ENCODE measurements at regions of chr16 and their contacts with region 1.

Region 1: DNA sequence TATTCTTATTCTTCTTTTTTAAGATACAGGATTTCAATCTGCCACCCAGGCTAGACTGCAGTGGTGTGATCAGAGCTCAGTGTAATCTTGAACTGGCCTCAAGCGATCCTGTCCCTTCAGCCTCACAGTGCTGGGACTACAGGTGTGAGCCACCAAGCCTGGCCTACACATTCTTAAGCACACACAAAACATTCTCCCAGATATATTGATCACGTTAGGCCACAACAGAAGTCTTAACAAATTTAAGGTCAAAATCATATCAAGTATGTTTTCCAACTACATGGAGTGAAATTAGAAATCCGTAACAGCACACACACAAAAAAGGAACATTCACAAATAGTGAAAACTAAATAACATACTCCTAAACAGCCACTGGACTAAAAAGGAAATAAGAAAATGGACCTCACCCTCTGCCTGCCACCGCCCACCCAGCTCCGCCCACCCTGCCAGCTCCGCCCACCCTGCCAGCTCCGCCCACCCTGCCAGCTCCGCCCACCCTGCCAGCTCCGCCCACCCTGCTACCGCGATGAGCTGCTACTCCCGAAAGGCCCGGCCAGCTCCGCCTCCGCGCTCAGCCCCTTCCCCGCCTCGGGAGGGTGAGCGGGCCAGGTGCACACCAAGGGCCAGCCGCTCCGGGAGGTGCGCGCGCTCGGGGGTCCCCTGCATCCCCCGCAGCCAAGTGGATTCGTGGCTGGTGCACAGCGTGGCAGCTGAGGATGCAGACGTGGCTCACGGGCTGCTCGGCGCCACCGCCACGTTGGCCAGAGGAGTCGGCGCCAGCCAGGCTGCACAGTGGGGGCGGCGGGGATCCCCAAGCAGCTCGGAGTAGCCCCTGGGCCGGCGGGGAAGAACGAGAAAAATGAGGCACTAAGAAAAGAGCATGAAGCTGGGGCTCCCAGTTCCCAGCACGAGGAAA is 41.2 kb downstream of the C16orf87 start:
- DNase-seq: peak; percentile 77 to 82 (median 79)
- H3K4me3 ChIP-seq: peak overlapping the region in 1 of 2 donors; percentile 76
- H3K4me3 Mint-ChIP-seq: peak overlapping the region; percentile 79 to 90 (median 85)
- H3K27ac ChIP-seq: peak overlapping the region; percentile 15
- H3K27ac Mint-ChIP-seq: peak overlapping the region; percentile 28 to 89 (median 87)
- H3K4me1 ChIP-seq: peaks cover 8% of the 10 kb centered on the region
- H3K4me1 Mint-ChIP-seq: peaks cover 15 to 20% (median 17%) of the 10 kb centered on the region in 4 donors
- H3K27me3 ChIP-seq: no peaks in the 10 kb centered on the region
- H3K27me3 Mint-ChIP-seq: no peaks in the 10 kb centered on the region

Region 2: GRCh38 chr16:46673320-46674013 is 116.3 kb before region 1 on chr16:
- CTCF ChIA-PET with region 1: no interaction called
- POLR2A ChIA-PET with region 1: no interaction called
- intact Hi-C with region 1: no loop called
- DNase-seq: peak; percentile 44 to 63 (median 47)
- H3K4me3 ChIP-seq: no peak overlapping the region
- H3K4me3 Mint-ChIP-seq: no peak overlapping the region
- H3K27ac ChIP-seq: no peak overlapping the region
- H3K27ac Mint-ChIP-seq: peak overlapping the region in 1 of 7 donors; percentile 35
- H3K4me1 ChIP-seq: no peaks in the 10 kb centered on the region
- H3K4me1 Mint-ChIP-seq: peaks cover 0 to 4% (median 2%) of the 10 kb centered on the region in 4 donors
- H3K27me3 ChIP-seq: no peaks in the 10 kb centered on the region
- H3K27me3 Mint-ChIP-seq: no peaks in the 10 kb centered on the region

Region 3: DNA sequence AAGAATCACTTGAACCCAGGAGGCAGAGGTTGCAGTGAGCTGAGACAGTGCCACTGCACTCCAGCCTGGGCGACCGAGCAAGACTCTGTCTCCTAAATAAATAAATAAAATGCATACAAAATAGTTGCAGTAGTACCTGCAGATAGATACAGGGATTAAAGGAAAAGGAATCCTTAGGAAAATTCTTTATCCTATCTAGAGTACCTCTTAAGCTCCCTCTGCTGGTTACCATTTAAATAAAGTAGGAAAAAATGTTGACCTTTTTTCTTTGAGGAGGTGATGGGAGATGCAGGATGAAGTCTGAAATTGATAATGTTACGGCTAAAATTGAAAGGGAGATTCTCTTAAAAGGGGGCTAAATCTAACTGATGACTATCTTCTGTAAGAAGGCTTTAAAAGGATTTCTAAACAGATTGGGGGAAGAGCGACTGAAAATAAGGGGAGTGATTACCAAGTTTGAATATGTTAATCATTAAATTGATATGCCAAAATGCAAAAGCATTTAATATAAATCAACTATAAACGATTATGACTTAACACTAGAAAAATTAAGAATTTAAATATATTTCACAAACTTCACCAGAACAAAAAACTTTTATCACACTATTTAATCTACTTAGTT is 11.8 kb after region 1 on chr16:
- CTCF ChIA-PET with region 1: interaction called, 18 read pairs
- POLR2A ChIA-PET with region 1: interaction called, 3 read pairs
- intact Hi-C with region 1: no loop called
- DNase-seq: no peak
- H3K4me3 ChIP-seq: no peak overlapping the region
- H3K4me3 Mint-ChIP-seq: peak overlapping the region in 2 of 8 donors; percentile 24 to 43
- H3K27ac ChIP-seq: no peak overlapping the region
- H3K27ac Mint-ChIP-seq: peak overlapping the region in 1 of 7 donors; percentile 62
- H3K4me1 ChIP-seq: peaks cover 12% of the 10 kb centered on the region
- H3K4me1 Mint-ChIP-seq: peaks cover 11 to 22% (median 15%) of the 10 kb centered on the region in 4 donors
- H3K27me3 ChIP-seq: no peaks in the 10 kb centered on the region
- H3K27me3 Mint-ChIP-seq: no peaks in the 10 kb centered on the region

Region 4: DNA sequence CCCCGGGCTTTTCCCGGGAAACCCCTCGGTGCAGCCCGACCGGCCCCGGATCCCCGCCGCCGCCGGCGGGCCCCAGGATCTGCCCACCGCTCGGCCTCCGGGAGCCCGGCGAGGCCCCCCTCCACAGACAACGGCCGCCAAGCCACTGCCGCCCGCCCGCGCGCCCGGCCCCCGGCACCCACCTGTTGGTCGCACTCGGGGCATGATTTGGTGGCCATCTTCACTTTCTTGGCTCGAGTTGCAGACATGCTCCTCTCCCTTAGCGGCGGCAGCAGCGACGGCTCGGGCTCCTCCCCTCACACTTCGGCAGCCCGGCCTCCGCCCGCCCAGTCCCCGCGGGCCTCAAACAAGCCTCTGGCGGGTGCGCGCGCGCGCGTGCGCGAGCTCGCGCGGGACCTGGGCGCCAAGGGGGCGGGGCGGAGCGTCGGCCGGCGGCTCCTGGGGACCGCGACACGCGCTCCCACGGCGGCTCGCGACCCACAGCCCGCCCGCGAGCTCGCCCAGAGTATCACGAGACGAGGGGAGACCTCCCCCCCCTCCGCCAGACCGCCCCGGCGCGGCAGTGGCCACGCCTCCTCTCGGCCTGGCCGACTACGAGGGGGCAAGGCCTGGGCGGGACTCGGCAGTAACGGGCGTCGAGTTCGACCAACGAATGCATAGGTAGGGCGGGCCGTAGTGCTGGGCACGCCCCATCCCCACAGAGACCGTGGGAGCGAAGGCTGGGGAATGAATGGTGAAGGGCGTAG is 41.3 kb after region 1 on chr16 and contains the start of gene C16orf87:
- CTCF ChIA-PET with region 1: interaction called, 4 read pairs
- POLR2A ChIA-PET with region 1: interaction called, 31 read pairs
- intact Hi-C with region 1: loop called (anchors 1 kb)
- DNase-seq: peak; percentile 92 to 95 (median 93)
- H3K4me3 ChIP-seq: peak within 1 kb of the TSS; percentile 74 to 84
- H3K4me3 Mint-ChIP-seq: peak within 1 kb of the TSS; percentile 92 to 100 (median 94)
- H3K27ac ChIP-seq: peak within 1 kb of the TSS; percentile 71
- H3K27ac Mint-ChIP-seq: peak within 1 kb of the TSS; percentile 89 to 99 (median 97)
- H3K4me1 ChIP-seq: peaks cover 41% of the 10 kb centered on the region
- H3K4me1 Mint-ChIP-seq: peaks cover 18 to 37% (median 25%) of the 10 kb centered on the region in 4 donors
- H3K27me3 ChIP-seq: no peaks in the 10 kb centered on the region
- H3K27me3 Mint-ChIP-seq: no peaks in the 10 kb centered on the region
- total RNA-seq, gene C16orf87: 5.8 to 6.2 TPM

Region 5: DNA sequence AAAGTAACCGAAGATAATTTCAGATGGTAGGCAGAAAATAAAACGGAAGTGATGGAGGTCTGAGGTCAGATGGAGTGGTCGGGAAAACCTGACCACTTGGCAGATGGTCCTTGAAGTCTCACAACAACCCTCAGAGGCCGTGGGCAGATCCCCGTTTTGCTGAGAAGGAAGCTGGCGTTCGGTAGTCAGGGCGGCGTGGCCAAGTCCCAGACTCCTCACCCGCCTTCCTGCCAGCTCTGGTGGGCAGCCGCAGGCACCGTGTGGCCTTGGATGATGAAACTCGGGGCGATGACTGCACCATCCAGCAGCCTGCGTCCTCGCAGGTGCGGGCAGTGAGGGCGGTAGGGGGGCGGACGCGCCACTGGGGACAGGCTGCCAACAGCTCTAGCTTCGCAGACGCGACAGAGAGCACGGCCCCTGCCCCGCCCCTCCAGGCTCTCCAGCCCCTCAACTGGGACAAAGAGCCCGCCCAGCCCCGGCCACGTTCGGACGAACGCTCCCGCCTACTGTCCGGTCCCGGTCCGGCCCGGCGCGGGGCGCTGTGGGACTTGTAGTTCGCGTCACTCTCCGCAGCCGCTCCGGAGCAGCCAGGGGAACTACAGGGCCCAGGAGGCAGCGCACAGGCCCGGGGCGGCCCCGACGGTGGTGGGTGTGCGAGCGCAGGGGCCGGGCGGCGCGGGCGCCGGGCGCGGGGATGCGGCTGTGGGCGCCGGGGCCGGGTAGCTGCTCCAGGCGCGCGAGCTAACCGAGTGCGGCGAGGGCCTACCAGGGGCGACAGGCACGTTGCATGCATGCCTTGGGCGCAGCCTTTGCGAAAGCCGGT is 94.1 kb after region 1 on chr16 and contains the start of gene GPT2:
- CTCF ChIA-PET with region 1: no interaction called
- POLR2A ChIA-PET with region 1: no interaction called
- intact Hi-C with region 1: loop called (anchors 1 kb)
- DNase-seq: peak; percentile 57 to 69 (median 64)
- H3K4me3 ChIP-seq: peak within 1 kb of the TSS; percentile 49 to 66
- H3K4me3 Mint-ChIP-seq: peak within 1 kb of the TSS; percentile 81 to 98 (median 88)
- H3K27ac ChIP-seq: no peak within 1 kb of the TSS
- H3K27ac Mint-ChIP-seq: peak within 1 kb of the TSS in 4 of 7 donors; percentile 7 to 77 (median 66)
- H3K4me1 ChIP-seq: peaks cover 10% of the 10 kb centered on the region
- H3K4me1 Mint-ChIP-seq: peaks cover 8 to 23% (median 15%) of the 10 kb centered on the region in 4 donors
- H3K27me3 ChIP-seq: no peaks in the 10 kb centered on the region
- H3K27me3 Mint-ChIP-seq: peaks cover 3 to 5% of the 10 kb centered on the region in 2 donors
- total RNA-seq, gene GPT2: 1.2 to 1.5 TPM